GM12878 (cell line): ENCODE measurements at regions of chr9 and their contacts with region 1.

Region 1: DNA sequence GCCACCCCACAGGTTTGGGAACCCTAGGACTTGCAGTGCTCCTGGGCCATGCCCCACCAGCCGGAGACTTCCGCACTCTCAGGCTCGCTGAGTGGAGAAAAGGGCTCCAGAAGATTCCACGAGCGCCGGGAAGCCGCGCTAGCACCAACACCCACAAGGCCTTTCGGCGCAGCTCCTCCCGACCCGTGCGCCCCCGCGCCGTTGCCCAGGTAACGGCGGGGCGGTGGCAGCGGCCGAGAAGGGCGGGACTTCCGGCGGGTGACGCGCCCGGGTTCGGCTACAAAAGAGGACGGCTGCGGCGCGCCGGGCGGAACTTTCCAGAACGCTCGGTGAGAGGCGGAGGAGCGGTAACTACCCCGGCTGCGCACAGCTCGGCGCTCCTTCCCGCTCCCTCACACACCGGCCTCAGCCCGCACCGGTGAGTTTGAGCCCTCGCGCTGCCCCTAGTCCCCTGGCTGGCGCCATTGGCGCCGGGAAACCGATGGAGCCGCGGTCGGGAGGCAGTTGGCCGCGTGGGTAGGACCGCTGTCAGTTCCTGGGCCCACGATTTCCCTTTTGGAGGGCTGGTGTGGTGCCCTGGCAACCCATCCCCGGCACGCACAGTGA is at the start of gene DNAJA1:
- DNase-seq: peak; percentile 57
- ATAC-seq: peak; percentile 90
- H3K4me3 ChIP-seq: peak within 1 kb of the TSS; percentile 75
- H3K27ac ChIP-seq: peak within 1 kb of the TSS; percentile 97
- H3K4me1 ChIP-seq: peaks cover 10% of the 10 kb centered on the region
- H3K27me3 ChIP-seq: no peaks in the 10 kb centered on the region
- CTCF ChIP-seq: no peak
- EP300 ChIP-seq: no peak; a peak in 1 of 4 replicates
- POLR2A ChIP-seq: peak; percentile 99
- RAD21 ChIP-seq: no peak
- polyA plus RNA-seq, gene DNAJA1: 115 to 149 TPM

Region 2: DNA sequence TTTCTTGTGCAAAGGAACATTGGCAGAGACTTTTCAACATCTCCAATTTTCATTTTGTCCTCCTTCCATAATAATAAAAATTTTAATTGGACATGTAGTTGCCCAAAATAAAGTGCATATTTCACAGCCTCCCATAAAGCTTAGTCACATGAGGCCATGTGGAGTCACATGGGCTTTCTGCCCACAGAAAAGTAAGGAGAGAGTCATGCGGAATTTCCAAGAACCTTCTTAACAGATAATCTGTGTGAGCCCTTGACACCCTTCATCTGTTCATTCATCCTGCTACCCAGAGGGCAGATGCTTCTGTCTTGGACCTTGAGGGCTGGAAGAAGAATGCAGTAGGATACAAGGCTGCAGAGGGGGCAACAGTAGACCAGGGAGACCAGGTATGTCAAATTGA is 84.3 kb before region 1 on chr9:
- CTCF ChIA-PET with region 1: no interaction called
- POLR2A ChIA-PET with region 1: no interaction called
- RAD21 ChIA-PET with region 1: no interaction called
- SMC1A ChIA-PET with region 1: no interaction called
- in situ Hi-C with region 1: no loop called
- intact Hi-C with region 1: no loop called
- DNase-seq: no peak
- ATAC-seq: no peak
- H3K4me3 ChIP-seq: no peak overlapping the region
- H3K27ac ChIP-seq: no peak overlapping the region
- H3K4me1 ChIP-seq: no peaks in the 10 kb centered on the region
- H3K27me3 ChIP-seq: no peaks in the 10 kb centered on the region
- CTCF ChIP-seq: no peak
- EP300 ChIP-seq: no peak
- POLR2A ChIP-seq: no peak
- RAD21 ChIP-seq: no peak

Region 3: DNA sequence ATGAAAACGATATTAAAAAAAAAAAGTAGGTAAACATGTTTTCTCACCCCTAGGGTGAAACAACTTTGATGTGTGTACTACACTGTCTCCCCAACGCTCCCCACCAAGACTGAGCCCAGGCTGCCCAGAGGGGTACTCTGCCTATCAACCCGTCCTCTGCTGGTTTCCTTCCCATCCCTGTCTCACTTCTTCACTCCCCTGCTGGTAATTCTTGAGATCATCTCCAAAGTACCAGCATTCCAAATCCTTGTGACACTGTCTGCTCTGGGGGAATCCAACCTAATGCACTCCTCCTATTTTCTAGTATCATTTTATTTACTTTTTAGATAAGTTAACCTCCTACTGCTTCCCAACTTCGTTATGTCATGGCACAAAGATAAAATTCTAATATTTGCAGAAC is 17.3 kb before region 1 on chr9:
- CTCF ChIA-PET with region 1: interaction called, 3 read pairs
- POLR2A ChIA-PET with region 1: interaction called, 46 read pairs
- RAD21 ChIA-PET with region 1: interaction called, 8 read pairs
- SMC1A ChIA-PET with region 1: interaction called, 5 read pairs
- in situ Hi-C with region 1: no loop called
- intact Hi-C with region 1: no loop called
- DNase-seq: no peak
- ATAC-seq: no peak
- H3K4me3 ChIP-seq: no peak overlapping the region
- H3K27ac ChIP-seq: no peak overlapping the region
- H3K4me1 ChIP-seq: no peaks in the 10 kb centered on the region
- H3K27me3 ChIP-seq: no peaks in the 10 kb centered on the region
- CTCF ChIP-seq: no peak
- EP300 ChIP-seq: no peak
- POLR2A ChIP-seq: no peak
- RAD21 ChIP-seq: no peak

Region 4: DNA sequence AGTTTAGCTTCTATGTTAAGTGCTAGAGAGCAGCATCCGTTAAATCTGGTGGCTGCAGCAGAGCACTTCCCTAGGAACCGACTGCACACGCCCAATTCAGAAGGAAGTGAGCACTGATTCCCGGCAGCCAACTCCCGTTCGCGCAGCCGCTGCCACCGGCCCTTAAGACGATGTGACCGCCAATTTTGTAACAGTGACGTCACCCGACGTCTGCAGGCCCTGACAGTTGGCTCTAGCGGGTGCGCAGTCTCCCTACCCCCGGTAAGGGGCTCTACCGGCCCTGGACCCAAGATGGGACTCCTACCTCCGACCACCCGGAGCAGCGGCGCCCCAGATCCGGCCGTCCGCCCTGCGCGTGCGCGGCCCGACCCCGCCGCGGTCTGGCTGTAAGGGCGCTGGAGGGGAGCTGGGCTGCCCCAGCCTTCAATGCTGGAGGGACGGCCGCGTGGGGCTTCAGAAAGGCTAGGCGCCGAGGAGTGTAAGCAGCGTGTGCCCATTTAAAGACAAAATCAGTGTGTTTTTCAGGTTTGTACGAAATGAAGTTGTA is 19.1 kb after region 1 on chr9:
- CTCF ChIA-PET with region 1: interaction called, 4 read pairs
- POLR2A ChIA-PET with region 1: interaction called, 39 read pairs
- RAD21 ChIA-PET with region 1: interaction called, 5 read pairs
- SMC1A ChIA-PET with region 1: interaction called, 17 read pairs
- in situ Hi-C with region 1: no loop called
- intact Hi-C with region 1: no loop called
- DNase-seq: no peak
- ATAC-seq: peak; percentile 88
- H3K4me3 ChIP-seq: peak overlapping the region; percentile 31; the same call in 1 of the 2 replicates
- H3K27ac ChIP-seq: peak overlapping the region; percentile 50
- H3K4me1 ChIP-seq: peaks cover 6% of the 10 kb centered on the region
- H3K27me3 ChIP-seq: no peaks in the 10 kb centered on the region
- CTCF ChIP-seq: no peak
- EP300 ChIP-seq: no peak
- POLR2A ChIP-seq: peak; percentile 76
- RAD21 ChIP-seq: no peak

Region 5: GRCh38 chr9:33065157-33066076 is 40.3 kb after region 1 on chr9:
- CTCF ChIA-PET with region 1: interaction called, 5 read pairs
- POLR2A ChIA-PET with region 1: interaction called, 24 read pairs
- RAD21 ChIA-PET with region 1: interaction called, 3 read pairs
- SMC1A ChIA-PET with region 1: interaction called, 5 read pairs
- in situ Hi-C with region 1: no loop called
- intact Hi-C with region 1: no loop called
- DNase-seq: peak; percentile 60
- ATAC-seq: peak; percentile 89
- H3K4me3 ChIP-seq: peak overlapping the region; percentile 30; the same call in 1 of the 2 replicates
- H3K27ac ChIP-seq: peak overlapping the region; percentile 94
- H3K4me1 ChIP-seq: peaks cover 15% of the 10 kb centered on the region
- H3K27me3 ChIP-seq: no peaks in the 10 kb centered on the region
- CTCF ChIP-seq: no peak
- EP300 ChIP-seq: peak; percentile 19 to 40; a peak in 1 of 4 replicates
- POLR2A ChIP-seq: no peak
- RAD21 ChIP-seq: no peak

Region 6: GRCh38 chr9:33076358-33077004 is 51.4 kb after region 1 on chr9 and contains the start of gene SMU1:
- CTCF ChIA-PET with region 1: interaction called, 3 read pairs
- POLR2A ChIA-PET with region 1: interaction called, 14 read pairs
- RAD21 ChIA-PET with region 1: no interaction called
- SMC1A ChIA-PET with region 1: interaction called, 4 read pairs
- in situ Hi-C with region 1: no loop called
- intact Hi-C with region 1: loop called (anchors 2 kb)
- DNase-seq: peak; percentile 86
- ATAC-seq: peak; percentile 98
- H3K4me3 ChIP-seq: peak within 1 kb of the TSS; percentile 88
- H3K27ac ChIP-seq: peak within 1 kb of the TSS; percentile 79
- H3K4me1 ChIP-seq: peaks cover 10% of the 10 kb centered on the region; the same call in 1 of the 2 replicates
- H3K27me3 ChIP-seq: no peaks in the 10 kb centered on the region
- CTCF ChIP-seq: no peak
- EP300 ChIP-seq: no peak
- POLR2A ChIP-seq: peak; percentile 94
- RAD21 ChIP-seq: no peak
- polyA plus RNA-seq, gene SMU1: 18.5 to 20.7 TPM

Region 7: DNA sequence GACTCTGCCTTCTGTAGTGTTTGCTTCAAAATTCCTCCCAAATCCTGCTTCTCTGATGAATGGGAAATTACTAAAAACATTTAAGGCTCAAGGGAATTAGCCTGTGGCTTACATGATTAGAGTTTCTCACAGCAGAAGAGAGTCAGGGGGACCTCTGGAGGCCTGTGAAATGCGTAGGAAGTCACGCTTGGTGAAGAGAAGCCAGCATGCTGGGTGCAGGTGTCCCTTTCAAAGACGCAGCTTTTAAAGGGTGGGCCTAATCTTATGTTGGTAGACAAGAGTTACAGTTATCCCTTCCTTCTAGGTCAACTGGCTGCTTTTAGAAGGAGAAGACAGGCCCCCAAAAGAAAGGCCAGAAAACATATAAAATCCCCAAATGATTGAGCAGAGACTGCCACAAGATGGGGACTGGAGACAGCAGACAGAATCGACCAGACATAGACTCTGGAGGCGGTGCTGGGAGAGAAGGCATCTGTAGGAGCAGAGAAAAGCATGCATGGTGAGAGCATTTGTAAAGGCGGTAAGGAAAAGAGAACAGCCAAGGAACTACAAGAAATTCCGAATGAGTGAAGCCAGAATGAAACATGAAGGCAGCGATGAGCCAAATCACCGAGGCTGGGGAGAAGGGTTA is 99.8 kb after region 1 on chr9:
- CTCF ChIA-PET with region 1: no interaction called
- POLR2A ChIA-PET with region 1: no interaction called
- RAD21 ChIA-PET with region 1: no interaction called
- SMC1A ChIA-PET with region 1: no interaction called
- in situ Hi-C with region 1: no loop called
- intact Hi-C with region 1: no loop called
- DNase-seq: no peak
- ATAC-seq: 0 out of 3 replicates have a peak, but pooled peaks have one; percentile 12
- H3K4me3 ChIP-seq: no peak overlapping the region
- H3K27ac ChIP-seq: peak overlapping the region; percentile 67
- H3K4me1 ChIP-seq: peaks cover 30% of the 10 kb centered on the region
- H3K27me3 ChIP-seq: no peaks in the 10 kb centered on the region
- CTCF ChIP-seq: peak in 2 of 3 experiments; percentile 3 to 53; a peak in 2 of 6 replicates
- EP300 ChIP-seq: peak in 1 of 2 experiments; percentile 17; a peak in 1 of 4 replicates
- POLR2A ChIP-seq: no peak
- RAD21 ChIP-seq: peak; percentile 71